ENCODE measurements at regions of chr2 and their contacts with region 1.

Region 1: GRCh38 chr2:72825241-72826155 is at the start of gene EXOC6B:
- DNase-seq: peak; percentile 86
- H3K4me3 ChIP-seq: peak within 1 kb of the TSS; percentile 74 to 79 (median 76)
- H3K27ac ChIP-seq: peak within 1 kb of the TSS; percentile 83
- H3K4me1 ChIP-seq: peaks cover 42% of the 10 kb centered on the region
- H3K27me3 ChIP-seq: no peaks in the 10 kb centered on the region
- CTCF ChIP-seq: no peak
- total RNA-seq, gene EXOC6B: 38.3 to 48.9 TPM

Region 2: GRCh38 chr2:72770879-72771461 is 54.5 kb before region 1 on chr2:
- CTCF ChIA-PET with region 1: no interaction called
- dilution Hi-C with region 1: no loop called
- in situ Hi-C with region 1: no loop called
- intact Hi-C with region 1: loop called (anchors 5 kb)
- DNase-seq: peak; percentile 60
- H3K4me3 ChIP-seq: no peak overlapping the region
- H3K27ac ChIP-seq: no peak overlapping the region
- H3K4me1 ChIP-seq: peaks cover 6% of the 10 kb centered on the region
- H3K27me3 ChIP-seq: no peaks in the 10 kb centered on the region
- CTCF ChIP-seq: peak; percentile 74 to 82

Measured in mammary epithelial cell (primary cell).